Activated naive CD8-positive, alpha-beta T cell treated with anti-CD3 and anti-CD28 coated beads, Interleukin-2, amount 10 ng/mL, durations not matched to agents 7 days and 5 days (primary cell): ENCODE measurements at regions of chr11 and their contacts with region 1.

Region 1: GRCh38 chr11:122743949-122744348 is 88.4 kb downstream of the UBASH3B start:
- DNase-seq: peak; percentile 70
- ATAC-seq: peak; percentile 67
- H3K4me3 Mint-ChIP-seq: no peak overlapping the region
- H3K27ac Mint-ChIP-seq: no peak overlapping the region
- H3K4me1 Mint-ChIP-seq: peaks cover 48% of the 10 kb centered on the region
- H3K27me3 Mint-ChIP-seq: no peaks in the 10 kb centered on the region

Region 2: DNA sequence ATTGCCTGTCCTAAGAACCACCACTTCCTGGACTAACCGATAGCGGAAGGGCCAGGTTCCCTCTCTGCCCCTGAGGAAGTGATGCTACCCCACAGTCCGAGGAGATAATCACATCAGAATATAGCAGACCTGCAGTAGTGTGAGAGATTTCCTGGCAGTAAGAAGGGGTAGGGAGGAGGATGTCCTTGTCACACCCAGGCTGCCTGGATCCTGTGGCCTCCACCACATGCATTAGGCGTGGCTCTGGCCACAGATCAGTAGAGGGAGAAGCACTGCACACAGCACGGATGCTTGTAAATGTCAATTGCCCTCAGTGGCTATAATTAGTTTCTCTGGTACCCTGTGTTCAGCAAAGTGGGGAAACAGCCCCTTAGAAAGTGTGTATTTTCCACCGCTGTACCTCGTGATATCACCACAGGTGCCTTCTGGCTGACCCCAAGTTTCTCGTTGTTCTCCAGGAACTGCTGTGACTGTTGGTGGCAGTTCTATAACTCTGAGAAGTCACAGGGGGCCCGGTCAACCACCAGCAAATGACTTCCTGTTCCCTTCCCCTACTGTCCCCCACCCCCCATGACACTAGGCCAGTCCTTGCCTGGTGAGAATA is 26.6 kb before region 1 on chr11:
- POLR2A ChIA-PET with region 1: interaction called, 10 read pairs
- DNase-seq: peak; percentile 72
- ATAC-seq: peak; percentile 87
- H3K4me3 Mint-ChIP-seq: peak overlapping the region; percentile 69
- H3K27ac Mint-ChIP-seq: peak overlapping the region; percentile 79
- H3K4me1 Mint-ChIP-seq: peaks cover 80% of the 10 kb centered on the region
- H3K27me3 Mint-ChIP-seq: no peaks in the 10 kb centered on the region

Region 3: DNA sequence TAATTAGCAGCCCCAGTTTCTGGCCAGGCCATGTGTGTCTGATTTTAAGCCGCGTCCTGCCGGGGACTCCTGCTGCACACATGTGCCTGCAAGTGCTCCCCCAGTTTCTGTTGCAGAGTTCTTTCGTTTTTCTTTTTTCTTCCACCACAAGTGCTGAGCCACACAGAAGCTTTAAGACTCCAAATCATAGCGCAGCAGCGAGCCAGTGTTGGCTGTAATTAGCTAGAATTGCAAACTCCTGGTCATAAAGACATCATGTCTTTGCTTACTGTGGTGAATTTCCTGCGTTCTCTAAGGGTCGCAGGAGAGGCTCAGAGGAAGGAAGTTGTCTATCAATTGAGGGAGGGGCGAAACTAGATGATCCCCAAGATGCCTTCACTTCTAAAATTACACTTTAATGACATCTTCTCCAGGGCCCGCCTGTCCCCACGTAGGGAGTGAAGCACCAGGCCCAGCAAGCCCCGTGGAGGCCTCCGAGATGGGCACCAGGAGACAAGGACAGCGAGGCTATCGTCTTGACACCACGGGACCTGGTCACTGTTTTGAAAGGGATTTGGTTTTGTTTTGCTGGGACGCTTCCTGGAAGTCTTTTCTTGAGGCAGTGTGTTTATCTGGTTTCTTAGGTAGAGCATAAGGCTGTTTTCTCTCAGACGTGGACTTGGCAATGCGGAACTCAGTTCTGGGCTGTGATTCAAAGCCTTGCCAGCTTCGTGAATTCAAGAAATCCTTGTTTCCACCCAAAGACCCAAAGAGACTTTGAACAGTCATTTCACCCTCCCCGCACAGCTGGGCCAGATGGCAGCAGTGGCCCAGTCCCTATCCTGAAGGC is 16.6 kb before region 1 on chr11:
- POLR2A ChIA-PET with region 1: interaction called, 27 read pairs
- DNase-seq: no peak
- ATAC-seq: peak; percentile 72
- H3K4me3 Mint-ChIP-seq: peak overlapping the region; percentile 82
- H3K27ac Mint-ChIP-seq: peak overlapping the region; percentile 93
- H3K4me1 Mint-ChIP-seq: peaks cover 62% of the 10 kb centered on the region
- H3K27me3 Mint-ChIP-seq: no peaks in the 10 kb centered on the region

Region 4: DNA sequence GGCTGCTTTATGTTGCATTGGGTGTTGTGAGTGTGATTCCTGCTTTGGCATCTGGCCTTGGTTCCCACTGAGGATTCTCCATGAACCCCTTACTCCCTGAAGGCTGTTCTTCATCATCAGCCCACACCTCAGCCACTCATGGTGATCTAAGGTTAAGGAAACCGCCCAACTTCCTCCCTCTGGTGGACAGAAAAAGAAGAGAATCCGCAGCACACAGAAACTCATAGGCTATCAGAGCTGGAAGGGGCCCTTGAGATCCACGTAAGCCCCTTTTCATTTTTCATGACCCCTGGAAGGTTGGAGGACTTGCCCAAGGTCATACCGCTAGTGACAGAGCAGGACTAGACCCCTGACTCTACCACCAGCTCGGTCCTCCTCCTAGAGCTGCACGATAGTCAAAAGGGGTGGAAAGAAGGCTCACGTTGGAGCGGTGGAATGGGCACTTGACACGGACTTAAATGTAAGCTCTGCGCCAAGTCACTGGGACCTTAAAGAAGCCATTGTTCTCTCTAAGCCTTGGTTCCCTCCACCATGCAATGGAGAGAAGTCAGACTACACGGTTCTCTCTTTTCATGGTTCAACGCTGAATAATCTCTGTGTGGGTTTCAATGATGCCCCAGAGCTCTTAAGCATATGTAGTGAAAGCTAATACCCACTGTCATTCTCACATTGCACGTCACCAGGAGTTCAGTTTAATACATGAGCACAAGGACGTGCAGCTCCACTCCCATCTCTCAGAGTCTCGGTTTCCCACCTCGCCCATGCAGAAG is 10.8 kb after region 1 on chr11:
- POLR2A ChIA-PET with region 1: interaction called, 12 read pairs
- DNase-seq: no peak
- ATAC-seq: peak; percentile 32
- H3K4me3 Mint-ChIP-seq: no peak overlapping the region
- H3K27ac Mint-ChIP-seq: peak overlapping the region; percentile 68
- H3K4me1 Mint-ChIP-seq: peaks cover 76% of the 10 kb centered on the region
- H3K27me3 Mint-ChIP-seq: no peaks in the 10 kb centered on the region